CD14-positive monocyte (primary cell): ENCODE measurements at regions of chr21 and their contacts with region 1.

Region 1: GRCh38 chr21:37496972-37497371 is 130.4 kb downstream of the DYRK1A start:
- DNase-seq: no peak
- H3K4me3 ChIP-seq: no peak overlapping the region
- H3K4me3 Mint-ChIP-seq: no peak overlapping the region
- H3K27ac ChIP-seq: no peak overlapping the region
- H3K27ac Mint-ChIP-seq: no peak overlapping the region
- H3K4me1 ChIP-seq: no peaks in the 10 kb centered on the region
- H3K4me1 Mint-ChIP-seq: no peaks in the 10 kb centered on the region
- H3K27me3 ChIP-seq: no peaks in the 10 kb centered on the region
- H3K27me3 Mint-ChIP-seq: no peaks in the 10 kb centered on the region
- CTCF ChIP-seq: peak; percentile 19

Region 2: GRCh38 chr21:36385233-36386030 is 1111.5 kb before region 1 on chr21 and contains the start of gene CHAF1B:
- intact Hi-C with region 1: loop called in 1 of 2 experiments (anchors 10 kb)
- DNase-seq: peak; percentile 56 to 74 (median 69)
- H3K4me3 ChIP-seq: peak within 1 kb of the TSS; percentile 23 to 77 (median 57)
- H3K4me3 Mint-ChIP-seq: peak within 1 kb of the TSS; percentile 68 to 80
- H3K27ac ChIP-seq: no peak within 1 kb of the TSS
- H3K27ac Mint-ChIP-seq: peak within 1 kb of the TSS in 1 of 7 donors; percentile 80
- H3K4me1 ChIP-seq: peaks cover 8 to 9% of the 10 kb centered on the region in 2 donors
- H3K4me1 Mint-ChIP-seq: peaks cover 6% of the 10 kb centered on the region
- H3K27me3 ChIP-seq: no peaks in the 10 kb centered on the region
- H3K27me3 Mint-ChIP-seq: peaks cover 0 to 1% (median 0%) of the 10 kb centered on the region in 3 donors
- CTCF ChIP-seq: no peak
- polyA plus RNA-seq, gene CHAF1B: 0.24 TPM in 1 of 3 donors, not detected in the others